Activated CD4-positive, alpha-beta memory T cell treated with anti-CD3 and anti-CD28 coated beads for 36 hours (primary cell): ENCODE measurements at regions of chr16 and their contacts with region 1.

Region 1: DNA sequence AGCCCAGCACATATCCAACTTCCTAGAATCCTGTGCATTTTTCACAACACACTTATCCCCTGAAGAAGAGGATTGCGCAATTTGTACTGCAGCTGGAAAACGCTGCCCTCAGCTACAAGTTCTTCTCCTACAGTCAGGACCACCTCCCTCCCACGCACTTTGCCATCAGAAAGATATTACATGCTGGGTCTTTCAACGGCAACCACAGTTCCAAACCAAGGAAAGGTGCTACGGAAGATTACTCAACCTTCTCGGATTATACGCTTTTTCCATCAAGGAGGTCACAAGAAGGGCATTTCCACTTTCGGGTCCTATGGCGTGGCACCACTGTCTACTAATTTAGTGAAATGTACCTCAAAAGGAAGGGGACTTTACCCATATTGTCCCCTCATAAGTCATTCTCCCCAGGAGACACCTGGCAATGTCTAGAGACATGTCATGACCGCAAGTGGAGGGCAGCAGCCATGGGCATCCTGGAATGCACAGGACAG is 35.2 kb downstream of the USP7 start:
- DNase-seq: peak; percentile 73
- H3K4me3 Mint-ChIP-seq: no peak overlapping the region
- H3K27ac Mint-ChIP-seq: peak overlapping the region; percentile 46
- H3K4me1 Mint-ChIP-seq: peaks cover 67% of the 10 kb centered on the region
- H3K27me3 Mint-ChIP-seq: no peaks in the 10 kb centered on the region

Region 2: DNA sequence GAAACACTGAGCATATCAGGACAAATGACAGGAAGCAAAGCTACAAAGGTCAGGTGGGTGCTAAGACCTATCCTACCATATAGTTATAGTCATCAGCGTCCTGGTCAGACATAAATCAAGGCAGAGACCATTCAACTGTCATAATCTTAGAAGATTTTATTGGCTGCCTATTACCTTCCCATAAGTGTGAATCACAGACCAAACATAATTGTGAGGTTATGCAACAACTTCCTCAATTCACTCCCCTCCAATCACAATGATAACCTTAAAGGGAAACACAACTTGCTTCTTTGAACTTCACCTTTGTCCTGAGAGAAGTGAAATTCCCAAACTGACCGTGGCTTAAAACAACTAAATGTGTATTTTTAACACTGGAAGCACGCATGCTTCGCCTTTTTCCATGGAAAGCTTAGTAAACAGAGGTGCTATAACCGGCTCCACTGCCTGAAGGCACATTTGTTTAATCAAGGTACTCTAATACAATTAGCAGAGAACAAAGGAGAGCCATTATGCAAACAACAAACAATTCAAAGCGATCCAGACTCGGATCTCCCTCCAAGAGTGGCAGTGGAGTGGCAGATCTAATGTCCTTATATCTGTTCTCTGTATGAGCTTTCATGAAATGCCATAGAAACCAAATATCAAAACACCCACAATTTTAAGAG is 423.1 kb before region 1 on chr16:
- CTCF ChIA-PET with region 1: no interaction called
- POLR2A ChIA-PET with region 1: no interaction called
- intact Hi-C with region 1: no loop called
- DNase-seq: no peak
- H3K4me3 Mint-ChIP-seq: no peak overlapping the region
- H3K27ac Mint-ChIP-seq: no peak overlapping the region
- H3K4me1 Mint-ChIP-seq: no peaks in the 10 kb centered on the region
- H3K27me3 Mint-ChIP-seq: peaks cover 12% of the 10 kb centered on the region

Region 3: GRCh38 chr16:8892101-8892575 is 36.4 kb before region 1 on chr16:
- CTCF ChIA-PET with region 1: no interaction called
- POLR2A ChIA-PET with region 1: interaction called, 6 read pairs
- intact Hi-C with region 1: loop called (anchors 1 kb)
- DNase-seq: peak; percentile 54
- H3K4me3 Mint-ChIP-seq: peak overlapping the region; percentile 58
- H3K27ac Mint-ChIP-seq: peak overlapping the region; percentile 97
- H3K4me1 Mint-ChIP-seq: peaks cover 26% of the 10 kb centered on the region
- H3K27me3 Mint-ChIP-seq: no peaks in the 10 kb centered on the region

Region 4: DNA sequence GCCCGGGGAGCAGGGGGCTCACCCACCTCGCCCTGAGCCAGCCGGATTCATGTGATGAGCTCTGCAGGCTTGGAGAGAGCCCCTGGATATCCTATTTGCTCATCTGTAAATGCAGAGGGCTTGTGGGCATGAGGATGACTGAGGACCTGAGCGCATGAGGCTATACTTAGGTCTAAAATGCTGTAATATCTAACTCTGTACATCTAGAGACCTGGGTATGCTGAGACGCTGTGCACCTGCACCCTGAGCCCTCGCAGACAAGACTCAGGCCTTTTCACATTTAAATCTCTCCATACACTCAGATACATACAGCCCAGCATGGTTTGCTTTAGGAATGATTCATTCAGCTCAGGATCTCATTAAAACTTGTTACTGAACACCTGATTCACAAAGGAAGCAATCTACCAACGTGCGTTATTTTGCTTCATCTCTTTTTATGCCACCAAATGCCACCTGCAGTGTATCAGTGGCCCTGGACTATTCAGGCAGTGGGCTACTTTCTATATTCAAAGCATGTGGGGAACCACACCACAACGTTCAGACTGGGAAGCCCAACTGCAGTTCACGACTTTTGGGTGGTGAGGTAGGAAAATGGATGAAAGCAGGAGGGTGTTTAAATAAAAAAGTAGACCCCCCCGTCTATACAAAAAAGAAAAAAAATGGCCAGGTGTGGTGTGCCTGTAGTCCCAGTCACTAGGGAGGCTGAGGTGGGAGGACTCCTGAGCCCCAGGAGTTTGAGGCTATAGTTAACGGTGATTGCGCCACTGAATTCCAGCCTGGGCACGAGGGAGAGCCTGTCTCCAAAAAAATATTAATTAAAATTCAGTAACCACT is 23.2 kb after region 1 on chr16:
- CTCF ChIA-PET with region 1: interaction called, 3 read pairs
- POLR2A ChIA-PET with region 1: no interaction called
- intact Hi-C with region 1: loop called (anchors 1 kb)
- DNase-seq: no peak
- H3K4me3 Mint-ChIP-seq: peak overlapping the region; percentile 12
- H3K27ac Mint-ChIP-seq: peak overlapping the region; percentile 42
- H3K4me1 Mint-ChIP-seq: peaks cover 89% of the 10 kb centered on the region
- H3K27me3 Mint-ChIP-seq: no peaks in the 10 kb centered on the region